A673 (cell line): ENCODE measurements at regions of chr12 and their contacts with region 1.

Region 1: GRCh38 chr12:24742378-24742777 is 206.5 kb downstream of the BCAT1 start:
- DNase-seq: no peak
- H3K4me3 ChIP-seq: no peak overlapping the region
- H3K27ac ChIP-seq: no peak overlapping the region
- H3K4me1 ChIP-seq: peaks cover 8% of the 10 kb centered on the region
- H3K27me3 ChIP-seq: no peaks in the 10 kb centered on the region
- CTCF ChIP-seq: no peak

Region 2: GRCh38 chr12:25286837-25287236 is 544.5 kb after region 1 on chr12:
- CTCF ChIA-PET with region 1: no interaction called
- POLR2A ChIA-PET with region 1: no interaction called
- intact Hi-C with region 1: no loop called
- DNase-seq: no peak
- H3K4me3 ChIP-seq: no peak overlapping the region
- H3K27ac ChIP-seq: no peak overlapping the region
- H3K4me1 ChIP-seq: no peaks in the 10 kb centered on the region
- H3K27me3 ChIP-seq: no peaks in the 10 kb centered on the region
- CTCF ChIP-seq: no peak

Region 3: GRCh38 chr12:25501522-25501921 is 759.1 kb after region 1 on chr12:
- CTCF ChIA-PET with region 1: no interaction called
- POLR2A ChIA-PET with region 1: no interaction called
- intact Hi-C with region 1: loop called (anchors 10 kb)
- DNase-seq: no peak
- H3K4me3 ChIP-seq: no peak overlapping the region
- H3K27ac ChIP-seq: no peak overlapping the region
- H3K4me1 ChIP-seq: no peaks in the 10 kb centered on the region
- H3K27me3 ChIP-seq: no peaks in the 10 kb centered on the region
- CTCF ChIP-seq: no peak